Common myeloid progenitor, CD34-positive (primary cell): ENCODE measurements at regions of chr19 and their contacts with region 1.

Region 1: GRCh38 chr19:4633140-4633967 is 6.0 kb upstream of the TNFAIP8L1 start:
- DNase-seq: peak; percentile 75 to 91 (median 89)
- H3K4me3 ChIP-seq: no peak overlapping the region
- H3K27ac ChIP-seq: no peak overlapping the region
- H3K4me1 ChIP-seq: peaks cover 0 to 48% (median 34%) of the 10 kb centered on the region in 4 experiments
- H3K27me3 ChIP-seq: no peaks in the 10 kb centered on the region

Region 2: DNA sequence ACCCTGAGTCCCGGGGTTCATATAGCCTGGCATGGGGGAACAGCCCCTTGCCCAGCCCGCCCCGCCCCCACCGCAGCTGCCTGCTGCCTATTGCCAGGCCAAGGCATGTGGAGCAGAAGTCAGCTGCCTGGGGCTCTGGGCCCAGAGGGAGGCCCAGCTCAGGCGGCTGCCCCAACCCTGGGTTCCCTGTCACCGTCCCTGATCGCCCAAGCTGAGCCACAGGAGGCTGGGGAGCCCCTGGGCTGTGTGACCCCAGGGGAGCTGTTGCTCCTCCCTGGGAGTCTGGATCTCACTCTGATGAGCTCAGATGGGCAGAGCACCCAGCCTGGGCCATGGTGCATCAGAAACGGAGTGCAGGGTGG is 116.4 kb before region 1 on chr19:
- CTCF ChIA-PET with region 1: no interaction called
- POLR2A ChIA-PET with region 1: no interaction called
- DNase-seq: no peak
- H3K4me3 ChIP-seq: no peak overlapping the region
- H3K27ac ChIP-seq: no peak overlapping the region
- H3K4me1 ChIP-seq: no peaks in the 10 kb centered on the region
- H3K27me3 ChIP-seq: no peaks in the 10 kb centered on the region

Region 3: GRCh38 chr19:4557971-4558941 is 75.1 kb before region 1 on chr19:
- CTCF ChIA-PET with region 1: interaction called, 13 read pairs
- POLR2A ChIA-PET with region 1: interaction called, 4 read pairs
- DNase-seq: peak in 1 of 3 donors; percentile 39
- H3K4me3 ChIP-seq: no peak overlapping the region
- H3K27ac ChIP-seq: no peak overlapping the region
- H3K4me1 ChIP-seq: peaks cover 0 to 19% (median 9%) of the 10 kb centered on the region in 4 experiments
- H3K27me3 ChIP-seq: no peaks in the 10 kb centered on the region

Region 4: GRCh38 chr19:4567584-4568071 is 65.7 kb before region 1 on chr19:
- CTCF ChIA-PET with region 1: interaction called, 46 read pairs
- POLR2A ChIA-PET with region 1: interaction called, 6 read pairs
- DNase-seq: peak in 2 of 3 donors; percentile 47 to 61
- H3K4me3 ChIP-seq: no peak overlapping the region
- H3K27ac ChIP-seq: no peak overlapping the region
- H3K4me1 ChIP-seq: peaks cover 0 to 12% (median 5%) of the 10 kb centered on the region in 4 experiments
- H3K27me3 ChIP-seq: no peaks in the 10 kb centered on the region

Region 5: GRCh38 chr19:4576016-4576933 is 57.1 kb before region 1 on chr19:
- CTCF ChIA-PET with region 1: interaction called, 46 read pairs
- POLR2A ChIA-PET with region 1: interaction called, 6 read pairs
- DNase-seq: peak; percentile 54 to 70 (median 62)
- H3K4me3 ChIP-seq: no peak overlapping the region
- H3K27ac ChIP-seq: no peak overlapping the region
- H3K4me1 ChIP-seq: peaks cover 0 to 13% (median 9%) of the 10 kb centered on the region in 4 experiments
- H3K27me3 ChIP-seq: peaks cover 0 to 69% (median 8%) of the 10 kb centered on the region in 5 experiments

Region 6: DNA sequence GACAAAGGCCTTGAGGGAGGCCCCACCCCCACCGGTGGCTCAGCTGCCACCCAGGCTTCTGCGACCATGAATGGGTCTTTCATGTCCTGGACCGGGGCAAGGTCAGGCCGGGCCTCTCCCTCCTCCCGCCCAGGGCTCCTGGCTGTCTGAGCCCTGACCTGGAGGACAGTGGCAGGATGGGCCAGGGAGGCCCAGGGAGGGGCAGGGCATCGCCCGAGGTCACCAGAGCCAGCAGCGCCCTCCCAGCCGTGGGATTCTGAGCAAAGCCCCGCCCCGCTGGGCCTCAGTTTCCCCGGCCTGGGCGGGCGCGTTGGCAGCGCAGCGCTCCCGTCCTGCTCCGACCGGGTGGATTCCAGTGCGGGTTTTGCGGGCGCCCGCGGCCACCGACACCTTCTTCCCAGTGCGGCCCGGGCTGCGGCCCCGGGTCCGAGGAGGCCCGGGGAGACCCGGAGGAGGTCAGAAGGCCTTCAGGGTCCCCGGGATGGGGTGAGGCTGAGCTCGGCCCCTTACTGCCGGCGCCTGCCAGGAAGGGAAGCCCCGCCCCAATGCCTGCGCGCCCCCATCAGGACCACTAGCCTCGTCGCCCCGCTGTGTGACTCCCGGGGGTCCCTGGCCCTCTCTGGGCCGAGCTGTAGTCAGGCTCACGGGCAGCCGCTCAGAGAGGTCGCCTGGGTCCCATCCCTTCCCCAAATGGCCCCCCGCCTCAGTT is 49.2 kb before region 1 on chr19:
- CTCF ChIA-PET with region 1: interaction called, 37 read pairs
- POLR2A ChIA-PET with region 1: no interaction called
- DNase-seq: no peak
- H3K4me3 ChIP-seq: peak overlapping the region; percentile 19 to 66 (median 38)
- H3K27ac ChIP-seq: no peak overlapping the region
- H3K4me1 ChIP-seq: peaks cover 0 to 31% (median 28%) of the 10 kb centered on the region in 4 experiments
- H3K27me3 ChIP-seq: peaks cover 0 to 62% (median 23%) of the 10 kb centered on the region in 5 experiments

Region 7: DNA sequence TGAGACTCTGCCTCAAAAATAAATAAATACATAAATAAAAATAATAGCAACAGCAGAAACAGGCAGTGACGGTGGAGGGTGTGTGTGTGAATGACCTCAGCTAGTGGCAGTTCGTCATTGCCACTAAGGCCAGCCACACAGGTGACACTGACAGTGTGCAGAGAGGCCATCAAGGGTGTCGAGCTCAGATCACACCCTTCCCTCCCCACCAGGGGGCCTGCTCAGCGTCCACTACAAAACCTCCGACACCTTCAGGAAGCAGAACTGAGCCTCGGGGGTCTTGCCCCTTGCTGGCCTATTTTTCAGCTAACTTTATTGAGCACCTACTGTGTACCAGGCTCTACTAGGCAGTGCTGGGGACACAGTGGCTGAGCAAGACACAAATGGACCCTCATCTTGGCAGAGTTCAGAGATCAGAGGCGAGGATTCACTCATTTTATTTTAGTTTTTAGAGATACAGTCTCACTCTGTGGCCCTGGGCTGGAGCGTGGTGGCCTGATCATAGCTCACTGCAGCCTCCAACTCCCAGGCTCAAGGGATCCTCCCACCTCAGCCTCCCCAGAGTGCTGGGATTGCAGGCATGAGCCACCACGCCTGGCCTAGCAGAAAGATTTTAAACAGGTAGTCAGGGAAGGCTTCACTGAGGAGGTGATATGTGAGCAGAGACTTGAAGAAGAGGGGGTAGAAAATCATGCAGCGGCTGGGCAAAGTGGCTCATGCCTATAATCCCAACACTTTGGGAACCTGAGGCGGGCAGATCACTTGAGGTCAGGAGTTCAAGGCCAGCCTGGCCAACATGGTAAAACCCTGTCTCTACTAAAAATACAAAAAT is 43.6 kb before region 1 on chr19:
- CTCF ChIA-PET with region 1: interaction called, 37 read pairs
- POLR2A ChIA-PET with region 1: interaction called, 4 read pairs
- DNase-seq: peak; percentile 44 to 66 (median 63)
- H3K4me3 ChIP-seq: no peak overlapping the region
- H3K27ac ChIP-seq: no peak overlapping the region
- H3K4me1 ChIP-seq: peaks cover 0 to 6% (median 3%) of the 10 kb centered on the region in 4 experiments
- H3K27me3 ChIP-seq: peaks cover 0 to 30% (median 11%) of the 10 kb centered on the region in 5 experiments

Region 8: GRCh38 chr19:4597975-4598671 is 35.2 kb before region 1 on chr19:
- CTCF ChIA-PET with region 1: interaction called, 37 read pairs
- POLR2A ChIA-PET with region 1: interaction called, 4 read pairs
- DNase-seq: peak; percentile 83 to 92 (median 90)
- H3K4me3 ChIP-seq: peak overlapping the region; percentile 22 to 71 (median 48)
- H3K27ac ChIP-seq: no peak overlapping the region
- H3K4me1 ChIP-seq: peaks cover 0 to 17% (median 16%) of the 10 kb centered on the region in 4 experiments
- H3K27me3 ChIP-seq: peaks cover 0 to 30% (median 7%) of the 10 kb centered on the region in 5 experiments

Region 9: GRCh38 chr19:4870025-4870700 is 236.8 kb after region 1 on chr19:
- CTCF ChIA-PET with region 1: no interaction called
- POLR2A ChIA-PET with region 1: no interaction called
- DNase-seq: peak; percentile 61 to 83 (median 81)
- H3K4me3 ChIP-seq: no peak overlapping the region
- H3K27ac ChIP-seq: no peak overlapping the region
- H3K4me1 ChIP-seq: peaks cover 0 to 28% (median 17%) of the 10 kb centered on the region in 4 experiments
- H3K27me3 ChIP-seq: no peaks in the 10 kb centered on the region